ENCODE measurements at regions of chr21 and their contacts with region 1.

Region 1: DNA sequence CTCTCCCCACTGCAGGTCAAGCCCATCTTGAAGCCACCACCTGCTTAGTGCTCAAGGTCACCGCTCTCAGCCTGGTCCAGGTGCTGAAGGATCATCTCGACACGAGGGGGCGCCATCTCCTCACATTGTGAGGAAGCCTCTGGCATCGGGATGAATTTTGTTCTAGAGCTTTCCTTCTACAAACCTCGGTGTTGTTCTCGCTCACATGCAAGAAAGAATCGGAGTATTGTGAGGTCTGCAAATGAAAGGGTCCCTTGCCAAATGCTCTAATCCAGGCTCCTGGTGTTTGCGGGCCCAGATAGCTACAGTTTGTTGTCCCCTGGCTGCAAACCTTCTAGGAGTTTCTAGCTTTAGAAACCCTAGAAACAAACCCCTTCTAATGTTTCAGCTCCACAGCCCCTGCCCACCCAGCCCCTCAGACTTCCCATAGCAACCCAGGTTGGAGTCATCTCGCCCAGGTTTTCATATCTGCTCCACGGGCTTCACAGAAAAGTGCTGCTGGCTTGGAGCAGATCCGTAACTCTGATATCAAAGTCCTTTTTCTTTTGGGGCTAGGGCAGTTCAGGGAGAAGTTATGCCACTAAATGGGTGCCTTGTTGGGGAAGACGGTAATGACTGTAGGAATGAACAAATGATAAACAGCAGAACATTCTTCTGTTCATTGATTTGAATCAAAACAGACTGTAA is 8.6 kb upstream of the ATP5PO start:
- DNase-seq: peak; percentile 90
- H3K4me3 Mint-ChIP-seq: no peak overlapping the region
- H3K27ac Mint-ChIP-seq: no peak overlapping the region
- H3K4me1 Mint-ChIP-seq: peaks cover 18% of the 10 kb centered on the region
- H3K27me3 Mint-ChIP-seq: no peaks in the 10 kb centered on the region

Region 2: GRCh38 chr21:33760641-33761440 is 163.4 kb before region 1 on chr21:
- CTCF ChIA-PET with region 1: no interaction called
- POLR2A ChIA-PET with region 1: no interaction called
- DNase-seq: no peak
- H3K4me3 Mint-ChIP-seq: no peak overlapping the region
- H3K27ac Mint-ChIP-seq: no peak overlapping the region
- H3K4me1 Mint-ChIP-seq: no peaks in the 10 kb centered on the region
- H3K27me3 Mint-ChIP-seq: no peaks in the 10 kb centered on the region

Region 3: DNA sequence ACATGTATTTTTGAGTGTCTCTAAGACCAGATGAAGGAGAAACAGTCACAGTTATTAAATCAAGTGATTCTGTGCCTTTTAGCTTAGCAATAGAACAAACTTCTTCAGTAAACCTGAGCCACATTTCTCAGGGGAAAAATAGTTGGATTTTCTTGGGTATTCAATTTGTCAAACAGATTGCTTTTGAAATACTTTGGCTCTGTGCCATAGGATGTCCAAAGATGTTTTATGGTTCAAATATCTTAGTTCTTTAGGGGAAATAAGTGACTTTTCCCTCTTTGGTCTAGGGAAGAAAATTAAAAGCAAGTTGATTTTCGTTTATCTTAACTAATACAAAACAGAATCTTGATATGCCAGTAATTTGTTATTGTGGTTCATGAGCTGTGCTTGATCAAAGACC is 134.5 kb before region 1 on chr21:
- CTCF ChIA-PET with region 1: no interaction called
- POLR2A ChIA-PET with region 1: no interaction called
- DNase-seq: no peak
- H3K4me3 Mint-ChIP-seq: no peak overlapping the region
- H3K27ac Mint-ChIP-seq: no peak overlapping the region
- H3K4me1 Mint-ChIP-seq: no peaks in the 10 kb centered on the region
- H3K27me3 Mint-ChIP-seq: no peaks in the 10 kb centered on the region

Region 4: DNA sequence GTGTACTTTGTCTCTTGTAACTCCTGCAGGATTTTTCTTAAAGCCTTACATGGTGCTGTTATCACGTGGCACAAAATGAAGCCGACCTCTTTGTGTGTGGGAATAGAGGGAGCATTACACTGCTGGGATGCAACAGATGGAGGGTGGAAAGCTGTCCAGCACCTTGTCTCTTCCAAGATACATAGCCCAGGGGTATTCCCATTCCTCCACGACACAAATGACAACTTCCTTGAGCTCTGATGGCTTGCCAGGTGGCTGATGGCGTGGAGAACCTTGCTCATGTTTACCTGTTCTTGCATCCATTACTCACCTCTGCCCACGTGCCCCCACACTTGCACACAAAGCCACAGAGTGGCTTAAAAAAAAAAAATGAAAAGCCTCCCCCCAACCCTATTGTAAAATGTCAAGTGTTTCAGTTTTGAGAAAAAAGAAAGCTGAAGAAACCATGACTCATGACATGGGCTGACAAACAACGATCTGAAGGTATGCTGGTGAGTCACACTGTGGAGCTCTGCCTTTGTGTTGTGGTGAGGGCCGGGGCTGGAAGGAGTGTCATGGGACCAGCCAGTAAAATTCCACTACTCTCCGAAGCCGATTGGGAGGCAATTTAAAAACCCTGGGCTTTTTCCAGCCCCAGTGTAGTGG is 23.4 kb after region 1 on chr21:
- CTCF ChIA-PET with region 1: interaction called, 20 read pairs
- POLR2A ChIA-PET with region 1: interaction called, 30 read pairs
- DNase-seq: peak; percentile 87
- H3K4me3 Mint-ChIP-seq: peak overlapping the region; percentile 68
- H3K27ac Mint-ChIP-seq: peak overlapping the region; percentile 99
- H3K4me1 Mint-ChIP-seq: peaks cover 77% of the 10 kb centered on the region
- H3K27me3 Mint-ChIP-seq: no peaks in the 10 kb centered on the region

Region 5: DNA sequence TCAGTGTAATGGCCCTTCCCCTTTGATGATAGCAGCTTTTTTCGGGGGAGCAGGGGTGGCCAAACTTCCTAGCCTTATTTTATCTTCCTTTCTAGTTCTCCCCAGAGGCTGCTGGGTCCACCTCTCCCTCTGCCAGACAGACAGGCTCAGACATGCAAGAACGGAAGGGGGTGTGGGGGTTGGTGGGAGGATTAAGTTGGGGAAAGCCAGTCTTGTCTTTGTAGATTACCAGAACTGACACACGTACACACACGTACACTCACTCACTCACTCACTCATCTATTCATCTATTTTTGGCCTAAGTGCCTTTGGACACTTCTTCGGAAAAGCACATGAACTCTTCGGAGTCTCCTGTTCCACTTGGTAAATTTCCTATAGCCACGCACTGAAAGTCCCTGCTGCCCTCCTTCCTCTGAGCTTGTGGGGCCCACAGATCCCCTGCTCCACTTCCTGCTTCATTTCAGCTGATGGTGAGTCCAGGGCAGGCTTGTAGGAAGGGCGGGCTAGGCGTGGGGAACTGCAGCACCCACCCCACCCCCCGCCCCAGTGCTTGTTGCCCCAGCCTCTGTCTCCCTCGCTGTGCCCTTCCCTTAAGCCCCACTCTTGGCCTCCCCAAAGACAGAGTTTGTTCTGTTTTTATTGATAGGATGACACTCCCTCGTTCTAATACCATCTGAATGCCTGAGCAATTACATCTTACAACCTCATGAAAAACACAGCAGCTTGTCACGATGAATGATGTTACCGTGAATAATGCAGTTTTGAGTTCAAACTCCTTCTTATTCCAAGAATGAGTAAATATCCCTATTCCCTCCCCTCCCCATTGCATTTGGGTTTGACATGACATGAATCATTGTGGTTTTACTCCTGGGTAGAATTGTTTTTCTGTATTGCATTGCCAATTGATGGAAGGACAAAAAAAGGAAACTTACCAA is 52.1 kb after region 1 on chr21:
- CTCF ChIA-PET with region 1: interaction called, 16 read pairs
- POLR2A ChIA-PET with region 1: interaction called, 10 read pairs
- DNase-seq: peak; percentile 58
- H3K4me3 Mint-ChIP-seq: peak overlapping the region; percentile 62
- H3K27ac Mint-ChIP-seq: peak overlapping the region; percentile 94
- H3K4me1 Mint-ChIP-seq: peaks cover 81% of the 10 kb centered on the region
- H3K27me3 Mint-ChIP-seq: no peaks in the 10 kb centered on the region

Region 6: DNA sequence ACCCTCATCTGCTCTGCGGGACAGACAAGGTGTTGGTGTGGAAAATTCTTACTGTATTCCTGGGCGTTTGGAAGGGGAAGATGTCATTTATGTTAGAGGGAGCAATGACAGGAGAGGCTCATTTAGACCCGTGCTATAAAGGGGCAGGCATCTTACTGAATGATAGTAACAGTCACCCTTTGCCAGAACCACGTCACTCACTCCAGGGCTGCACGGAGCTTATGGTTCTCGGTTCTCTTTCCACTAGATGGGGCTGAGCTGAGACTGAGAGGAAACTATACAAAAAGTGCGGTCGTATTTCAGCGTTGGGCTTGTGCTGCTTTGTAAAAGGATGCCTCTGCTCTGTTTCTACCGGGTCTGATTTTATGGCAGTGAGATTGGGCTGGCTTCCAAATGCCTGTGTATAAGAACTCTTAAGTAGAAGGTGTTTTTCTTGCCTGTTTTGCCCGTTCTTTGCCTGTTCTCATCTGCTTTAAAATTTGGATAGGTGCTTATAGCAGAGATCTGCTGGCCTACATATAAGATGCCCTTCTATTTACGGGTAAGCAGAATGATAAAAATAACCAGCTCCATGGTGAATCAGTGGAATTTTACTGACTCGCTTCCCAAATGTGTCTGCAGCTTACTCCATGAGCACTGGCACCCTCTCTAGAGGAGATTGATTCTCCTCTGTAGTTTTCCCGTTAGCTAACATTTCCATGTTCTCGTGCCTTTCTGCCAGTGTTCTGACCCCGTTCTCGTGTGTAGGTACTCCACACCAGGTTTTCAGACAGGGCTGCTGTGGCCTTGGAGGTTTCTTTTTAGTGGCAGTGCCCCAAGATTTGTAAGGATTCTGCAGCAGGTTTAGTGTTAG is 205.0 kb after region 1 on chr21:
- CTCF ChIA-PET with region 1: interaction called, 20 read pairs
- POLR2A ChIA-PET with region 1: interaction called, 6 read pairs
- DNase-seq: peak; percentile 56
- H3K4me3 Mint-ChIP-seq: no peak overlapping the region
- H3K27ac Mint-ChIP-seq: peak overlapping the region; percentile 48
- H3K4me1 Mint-ChIP-seq: peaks cover 50% of the 10 kb centered on the region
- H3K27me3 Mint-ChIP-seq: no peaks in the 10 kb centered on the region

Region 7: DNA sequence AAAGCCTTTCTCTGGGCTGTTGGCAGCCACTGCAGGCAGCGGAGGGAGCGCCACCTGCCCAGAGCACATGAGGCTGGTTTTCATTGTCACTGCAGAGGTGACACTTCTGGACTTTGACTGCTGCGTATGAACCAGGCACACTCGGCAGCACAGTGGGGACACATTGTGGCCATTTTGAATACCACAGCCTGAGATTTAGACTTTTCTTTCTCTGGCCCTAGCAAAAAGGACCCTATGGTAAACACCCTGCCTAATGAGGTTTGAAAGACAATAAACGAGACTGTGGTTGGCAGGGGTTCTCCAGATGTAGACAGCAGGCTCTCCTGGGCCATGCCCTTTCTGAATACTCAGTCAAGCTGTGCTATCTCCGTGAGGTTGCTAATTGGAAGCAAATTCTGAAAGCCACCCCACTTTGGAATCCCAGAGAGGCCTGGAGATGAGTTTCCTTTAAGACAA is 427.6 kb after region 1 on chr21:
- CTCF ChIA-PET with region 1: interaction called, 253 read pairs
- POLR2A ChIA-PET with region 1: interaction called, 17 read pairs
- DNase-seq: peak; percentile 37
- H3K4me3 Mint-ChIP-seq: no peak overlapping the region
- H3K27ac Mint-ChIP-seq: no peak overlapping the region
- H3K4me1 Mint-ChIP-seq: peaks cover 4% of the 10 kb centered on the region
- H3K27me3 Mint-ChIP-seq: peaks cover 21% of the 10 kb centered on the region

Region 8: DNA sequence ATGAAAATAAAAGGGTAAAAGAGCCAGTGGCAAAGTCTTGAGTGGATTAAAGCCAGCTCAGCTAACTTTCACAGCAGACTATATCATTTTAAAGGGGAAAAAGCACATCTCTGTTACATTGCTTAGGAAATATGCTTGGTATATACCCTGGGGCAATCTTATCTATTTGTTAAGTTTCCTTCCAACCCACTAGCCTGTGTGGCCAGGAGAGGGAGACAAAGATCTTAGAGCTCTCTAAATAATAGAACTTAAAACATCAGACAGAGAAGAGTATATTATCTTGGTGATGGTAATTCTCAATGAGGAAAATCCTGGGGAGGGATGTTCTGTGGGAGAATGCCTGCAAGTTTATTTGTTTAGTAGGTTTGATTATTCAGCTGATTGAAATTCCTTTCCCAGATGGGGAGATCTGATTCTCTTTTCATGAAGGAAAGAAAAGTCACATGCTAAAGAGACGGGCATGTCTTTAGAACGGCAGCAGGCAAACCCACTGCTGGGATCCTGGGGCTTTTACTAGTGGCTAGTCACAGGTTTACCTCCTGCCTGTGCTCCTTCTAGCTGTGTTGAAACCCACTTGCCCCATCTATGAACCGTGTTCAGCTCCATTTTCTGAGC is 443.2 kb after region 1 on chr21:
- CTCF ChIA-PET with region 1: interaction called, 18 read pairs
- POLR2A ChIA-PET with region 1: no interaction called
- DNase-seq: peak; percentile 35
- H3K4me3 Mint-ChIP-seq: no peak overlapping the region
- H3K27ac Mint-ChIP-seq: no peak overlapping the region
- H3K4me1 Mint-ChIP-seq: no peaks in the 10 kb centered on the region
- H3K27me3 Mint-ChIP-seq: peaks cover 19% of the 10 kb centered on the region

Measured in activated CD4-positive, alpha-beta memory T cell treated with anti-CD3 and anti-CD28 coated beads, Interleukin-2, amount 10 ng/mL, durations not matched to agents 7 days and 5 days (primary cell).